Mammary epithelial cell (primary cell): ENCODE measurements at regions of chr13 and their contacts with region 1.

Region 1: GRCh38 chr13:28138012-28138755 is at the start of gene PAN3:
- DNase-seq: peak; percentile 88
- H3K4me3 ChIP-seq: peak within 1 kb of the TSS; percentile 73 to 79 (median 77)
- H3K27ac ChIP-seq: peak within 1 kb of the TSS; percentile 86
- H3K4me1 ChIP-seq: peaks cover 3% of the 10 kb centered on the region
- H3K27me3 ChIP-seq: no peaks in the 10 kb centered on the region
- CTCF ChIP-seq: no peak
- total RNA-seq, gene PAN3: 25.4 to 28.2 TPM

Region 2: GRCh38 chr13:27728271-27728670 is 409.9 kb before region 1 on chr13:
- CTCF ChIA-PET with region 1: no interaction called
- dilution Hi-C with region 1: no loop called
- in situ Hi-C with region 1: no loop called
- intact Hi-C with region 1: no loop called
- DNase-seq: no peak
- H3K4me3 ChIP-seq: no peak overlapping the region
- H3K27ac ChIP-seq: no peak overlapping the region
- H3K4me1 ChIP-seq: no peaks in the 10 kb centered on the region
- H3K27me3 ChIP-seq: no peaks in the 10 kb centered on the region
- CTCF ChIP-seq: no peak

Region 3: GRCh38 chr13:28181413-28181812 is 43.2 kb after region 1 on chr13:
- CTCF ChIA-PET with region 1: no interaction called
- dilution Hi-C with region 1: no loop called
- in situ Hi-C with region 1: no loop called
- intact Hi-C with region 1: loop called (anchors 5 kb)
- DNase-seq: peak; percentile 90
- H3K4me3 ChIP-seq: no peak overlapping the region
- H3K27ac ChIP-seq: peak overlapping the region; percentile 38
- H3K4me1 ChIP-seq: no peaks in the 10 kb centered on the region
- H3K27me3 ChIP-seq: no peaks in the 10 kb centered on the region
- CTCF ChIP-seq: no peak

Region 4: GRCh38 chr13:28313579-28313978 is 175.4 kb after region 1 on chr13:
- CTCF ChIA-PET with region 1: no interaction called
- dilution Hi-C with region 1: no loop called
- in situ Hi-C with region 1: no loop called
- intact Hi-C with region 1: loop called (anchors 1 kb)
- DNase-seq: no peak
- H3K4me3 ChIP-seq: no peak overlapping the region
- H3K27ac ChIP-seq: no peak overlapping the region
- H3K4me1 ChIP-seq: peaks cover 5% of the 10 kb centered on the region
- H3K27me3 ChIP-seq: no peaks in the 10 kb centered on the region
- CTCF ChIP-seq: no peak

Region 5: GRCh38 chr13:28548872-28549271 is 410.7 kb after region 1 on chr13:
- CTCF ChIA-PET with region 1: no interaction called
- dilution Hi-C with region 1: no loop called
- in situ Hi-C with region 1: no loop called
- intact Hi-C with region 1: no loop called
- DNase-seq: no peak
- H3K4me3 ChIP-seq: no peak overlapping the region
- H3K27ac ChIP-seq: no peak overlapping the region
- H3K4me1 ChIP-seq: no peaks in the 10 kb centered on the region
- H3K27me3 ChIP-seq: no peaks in the 10 kb centered on the region
- CTCF ChIP-seq: no peak

Region 6: DNA sequence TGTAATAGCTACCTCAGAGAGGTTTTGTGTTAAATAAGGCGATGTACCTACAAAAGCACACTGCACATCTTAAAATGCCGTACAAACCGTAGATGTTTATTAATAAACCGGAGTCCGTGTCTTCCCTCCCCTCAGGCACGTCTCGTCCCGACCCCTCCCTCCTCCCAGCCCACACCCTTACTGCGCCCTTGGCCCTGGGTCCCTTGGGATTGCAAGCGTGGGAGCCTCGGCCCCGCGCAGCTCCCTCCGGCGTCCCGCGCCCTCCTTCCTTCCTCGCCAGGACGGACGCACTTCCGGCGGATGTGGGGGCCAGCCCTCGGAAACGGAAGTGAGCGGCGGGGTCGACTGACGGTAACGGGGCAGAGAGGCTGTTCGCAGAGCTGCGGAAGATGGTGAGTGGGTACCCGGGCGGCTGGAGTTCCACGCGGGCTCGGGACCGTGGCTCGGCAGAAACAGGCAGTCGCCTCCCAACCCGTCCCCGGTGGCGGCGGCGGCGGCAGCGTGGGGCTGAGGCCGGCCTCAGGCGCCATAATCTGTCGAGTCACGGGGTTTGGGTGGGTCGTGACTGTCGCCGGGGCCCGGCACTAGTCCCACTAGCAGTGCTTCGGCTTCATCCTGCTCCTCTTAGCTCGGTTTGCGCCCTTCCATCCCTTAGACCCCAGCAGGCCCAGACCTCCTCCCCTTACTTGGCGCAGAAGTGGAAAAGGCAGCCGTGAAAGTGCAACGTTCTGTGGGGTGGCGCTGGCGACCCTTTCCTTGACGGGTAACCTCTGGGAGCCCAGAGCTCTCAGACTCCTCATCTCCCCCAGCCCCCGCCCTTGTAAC is 520.8 kb after region 1 on chr13 and contains the start of gene POMP:
- CTCF ChIA-PET with region 1: no interaction called
- dilution Hi-C with region 1: no loop called
- in situ Hi-C with region 1: no loop called
- intact Hi-C with region 1: loop called (anchors 5 kb)
- DNase-seq: peak; percentile 86
- H3K4me3 ChIP-seq: peak within 1 kb of the TSS; percentile 73 to 74 (median 73)
- H3K27ac ChIP-seq: peak within 1 kb of the TSS; percentile 93
- H3K4me1 ChIP-seq: peaks cover 28% of the 10 kb centered on the region
- H3K27me3 ChIP-seq: no peaks in the 10 kb centered on the region
- CTCF ChIP-seq: no peak
- total RNA-seq, gene POMP: 59.8 to 89.3 TPM